Activated naive CD4-positive, alpha-beta T cell treated with anti-CD3 and anti-CD28 coated beads for 36 hours (primary cell): ENCODE measurements at regions of chr10 and their contacts with region 1.

Region 1: DNA sequence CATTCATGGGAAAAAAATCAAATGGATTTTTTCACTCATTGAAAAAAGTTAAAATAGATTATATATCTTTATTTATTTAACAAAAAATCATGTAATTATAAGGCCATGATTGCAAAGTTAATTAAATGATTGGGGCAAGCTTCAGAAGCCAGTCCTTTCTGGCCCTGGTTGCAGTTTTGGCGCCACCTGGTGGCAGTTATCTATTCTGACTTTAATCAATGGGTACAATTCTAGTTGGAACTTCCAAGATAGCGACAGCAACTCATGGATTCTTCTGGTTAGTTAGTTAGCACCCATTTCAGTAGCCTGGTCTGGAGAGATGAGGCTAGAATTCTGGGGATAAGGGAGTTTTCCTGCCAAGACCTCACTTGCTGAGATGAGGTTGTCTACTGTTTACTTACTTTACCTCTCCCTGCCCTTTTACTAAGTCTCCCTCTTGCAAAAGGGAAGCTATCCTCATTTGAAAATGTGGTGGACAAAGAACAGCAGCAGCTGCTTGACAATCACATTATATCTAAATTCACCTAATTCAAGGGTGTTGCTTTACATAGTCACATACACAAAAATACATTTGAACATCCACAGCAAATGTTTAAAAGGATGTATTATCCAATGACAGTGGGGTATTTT is 42.3 kb downstream of the NOC3L start:
- DNase-seq: peak; percentile 79
- H3K4me3 Mint-ChIP-seq: no peak overlapping the region
- H3K27ac Mint-ChIP-seq: no peak overlapping the region
- H3K4me1 Mint-ChIP-seq: no peaks in the 10 kb centered on the region
- H3K27me3 Mint-ChIP-seq: no peaks in the 10 kb centered on the region

Region 2: DNA sequence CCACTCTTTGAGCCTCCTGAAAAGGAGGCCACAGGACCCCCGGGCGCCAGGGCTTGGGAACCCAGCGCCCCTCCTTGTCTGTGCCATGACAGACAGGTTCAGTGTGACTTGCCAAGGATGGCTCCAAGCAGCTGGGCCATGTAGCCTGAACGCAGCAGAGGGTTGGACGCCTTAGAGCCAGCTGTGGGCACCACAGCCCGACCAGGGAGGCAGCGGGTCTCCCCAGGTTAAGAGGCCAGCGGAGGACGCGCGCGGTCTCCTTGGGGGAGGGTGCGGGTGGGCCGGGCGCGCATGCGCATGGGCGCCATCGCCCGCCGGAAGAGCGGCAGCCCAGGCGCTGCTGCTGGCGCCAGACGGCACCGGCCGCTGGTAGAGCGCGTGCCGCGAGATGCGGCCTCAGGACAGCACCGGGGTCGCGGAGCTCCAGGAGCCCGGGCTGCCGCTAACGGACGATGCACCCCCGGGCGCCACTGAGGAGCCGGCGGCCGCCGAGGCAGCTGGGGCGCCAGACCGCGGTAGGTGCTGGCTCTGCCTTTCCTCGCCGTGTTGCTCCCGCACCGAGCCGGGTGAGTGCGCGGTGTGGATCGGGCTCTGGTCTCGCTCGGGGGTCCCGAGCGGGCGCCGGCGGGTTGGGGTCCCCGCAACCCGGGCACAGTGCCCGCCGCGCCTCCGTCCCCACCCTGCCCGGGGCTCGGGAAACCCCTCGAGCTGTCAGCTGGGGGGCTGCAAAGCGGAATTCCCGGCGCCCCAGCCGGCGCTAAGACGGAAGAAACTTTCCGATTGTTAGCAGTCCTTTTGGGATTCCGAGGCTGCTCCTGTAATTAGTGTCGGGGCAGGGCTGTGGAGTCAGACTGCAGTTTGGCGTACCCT is 426.5 kb before region 1 on chr10 and contains the start of gene SLC35G1:
- CTCF ChIA-PET with region 1: no interaction called
- intact Hi-C with region 1: no loop called
- DNase-seq: peak; percentile 71
- H3K4me3 Mint-ChIP-seq: peak within 1 kb of the TSS; percentile 82
- H3K27ac Mint-ChIP-seq: peak within 1 kb of the TSS; percentile 37
- H3K4me1 Mint-ChIP-seq: peaks cover 37% of the 10 kb centered on the region
- H3K27me3 Mint-ChIP-seq: no peaks in the 10 kb centered on the region
- total RNA-seq, gene SLC35G1: 3.8 to 4.1 TPM

Region 3: DNA sequence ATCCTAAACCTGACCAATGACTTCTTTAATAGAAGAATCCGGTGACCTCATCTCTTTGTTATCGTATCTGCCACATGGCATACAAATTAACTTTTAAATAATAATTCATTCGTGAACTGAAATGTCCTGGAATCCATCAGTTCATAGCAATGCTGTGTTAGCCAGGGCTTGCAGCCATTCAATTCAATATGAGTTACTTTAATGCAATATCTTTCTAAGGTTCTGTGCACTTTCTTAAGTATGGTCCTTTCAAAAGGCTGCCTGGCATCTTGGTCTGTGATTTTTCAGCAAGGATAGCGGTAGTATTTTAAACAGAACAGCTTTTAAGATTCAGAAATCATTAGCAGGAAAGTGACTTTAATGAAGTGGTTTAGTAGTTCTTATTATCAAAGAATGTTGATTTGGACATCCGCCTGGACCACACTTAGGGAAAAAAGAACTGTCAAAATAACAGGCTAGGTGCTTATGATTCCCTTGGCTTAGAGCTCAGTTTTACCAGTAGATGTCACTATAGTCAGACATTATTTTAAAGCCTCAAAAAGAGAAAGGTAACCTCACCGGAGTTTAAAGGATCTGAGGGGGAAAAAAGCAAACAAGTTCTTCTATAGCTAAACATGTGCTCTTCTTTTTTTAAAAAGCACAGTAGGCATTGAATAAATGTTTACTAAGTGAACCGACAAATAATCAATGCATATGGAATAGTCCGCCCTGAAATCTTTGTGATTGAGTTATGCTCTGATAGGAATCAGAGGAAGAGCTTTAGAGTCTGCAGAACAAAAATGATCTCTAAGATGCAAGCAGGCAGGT is 403.9 kb before region 1 on chr10:
- CTCF ChIA-PET with region 1: interaction called, 18 read pairs
- intact Hi-C with region 1: loop called (anchors 1 kb)
- DNase-seq: no peak
- H3K4me3 Mint-ChIP-seq: no peak overlapping the region
- H3K27ac Mint-ChIP-seq: no peak overlapping the region
- H3K4me1 Mint-ChIP-seq: no peaks in the 10 kb centered on the region
- H3K27me3 Mint-ChIP-seq: no peaks in the 10 kb centered on the region

Region 4: DNA sequence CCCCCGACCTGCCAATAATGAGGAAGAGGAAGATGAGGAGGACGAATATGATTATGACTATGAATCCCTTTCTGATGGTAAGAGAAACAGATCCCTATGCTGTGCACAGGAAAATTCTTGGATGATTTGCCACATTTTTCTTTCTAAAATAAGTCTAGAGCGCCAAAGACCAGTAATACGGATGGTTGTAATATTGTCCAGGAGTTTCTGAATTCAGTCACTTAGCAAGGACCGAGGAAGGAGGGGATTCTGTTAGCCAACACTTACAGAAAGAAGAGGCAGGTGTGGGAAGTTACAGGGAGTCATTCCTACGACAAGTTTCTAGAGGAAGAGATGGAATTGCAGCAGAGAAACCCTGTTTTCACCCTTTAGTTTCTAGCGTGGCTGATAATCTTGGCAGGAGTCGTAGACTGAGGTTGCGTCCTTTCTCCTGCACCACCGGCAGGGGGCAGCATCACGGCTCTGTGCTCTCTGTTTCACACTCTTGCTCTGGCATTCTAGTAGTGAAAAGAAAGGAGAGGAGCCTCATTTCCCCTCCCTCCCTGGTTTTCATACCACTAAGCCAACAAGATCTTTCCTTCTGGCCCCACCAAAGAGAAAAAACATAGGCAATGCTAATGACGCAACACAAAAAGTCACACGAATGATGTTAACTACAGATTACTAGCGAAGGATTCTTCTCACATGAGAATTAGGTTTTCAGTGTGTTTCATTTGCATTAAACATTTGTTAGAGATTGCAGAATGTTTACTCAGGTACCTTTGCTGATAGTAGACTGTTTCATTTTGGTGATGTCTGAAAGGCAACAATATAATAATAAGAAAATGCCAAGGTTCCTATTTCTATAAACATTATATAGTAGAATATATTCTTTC is 40.3 kb before region 1 on chr10:
- CTCF ChIA-PET with region 1: interaction called, 3 read pairs
- intact Hi-C with region 1: loop called (anchors 1 kb)
- DNase-seq: peak; percentile 63
- H3K4me3 Mint-ChIP-seq: no peak overlapping the region
- H3K27ac Mint-ChIP-seq: no peak overlapping the region
- H3K4me1 Mint-ChIP-seq: peaks cover 5% of the 10 kb centered on the region
- H3K27me3 Mint-ChIP-seq: peaks cover 11% of the 10 kb centered on the region

Region 5: GRCh38 chr10:94308866-94309265 is 11.5 kb before region 1 on chr10:
- CTCF ChIA-PET with region 1: interaction called, 22 read pairs
- intact Hi-C with region 1: no loop called
- DNase-seq: no peak
- H3K4me3 Mint-ChIP-seq: no peak overlapping the region
- H3K27ac Mint-ChIP-seq: no peak overlapping the region
- H3K4me1 Mint-ChIP-seq: no peaks in the 10 kb centered on the region
- H3K27me3 Mint-ChIP-seq: peaks cover 46% of the 10 kb centered on the region

Region 6: DNA sequence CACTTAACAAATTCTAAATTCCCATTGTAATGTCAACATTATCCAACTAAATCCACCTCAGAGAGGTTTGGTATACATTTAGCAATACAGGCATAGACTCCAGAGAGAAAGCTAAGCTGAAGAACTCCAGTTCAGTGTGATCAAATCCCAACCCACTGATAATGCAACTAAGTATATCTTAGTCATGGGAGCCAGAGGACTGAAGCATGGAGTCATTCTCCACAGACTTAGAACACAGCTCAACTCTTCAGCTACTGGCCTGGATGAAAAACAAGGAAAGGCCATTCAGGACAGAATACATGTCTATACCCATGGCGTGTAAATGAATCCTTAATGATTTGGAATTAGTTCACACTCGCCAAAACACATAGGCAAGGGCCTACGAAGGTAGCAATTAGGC is 14.5 kb after region 1 on chr10:
- CTCF ChIA-PET with region 1: interaction called, 27 read pairs
- intact Hi-C with region 1: no loop called
- DNase-seq: no peak
- H3K4me3 Mint-ChIP-seq: no peak overlapping the region
- H3K27ac Mint-ChIP-seq: no peak overlapping the region
- H3K4me1 Mint-ChIP-seq: no peaks in the 10 kb centered on the region
- H3K27me3 Mint-ChIP-seq: no peaks in the 10 kb centered on the region

Region 7: DNA sequence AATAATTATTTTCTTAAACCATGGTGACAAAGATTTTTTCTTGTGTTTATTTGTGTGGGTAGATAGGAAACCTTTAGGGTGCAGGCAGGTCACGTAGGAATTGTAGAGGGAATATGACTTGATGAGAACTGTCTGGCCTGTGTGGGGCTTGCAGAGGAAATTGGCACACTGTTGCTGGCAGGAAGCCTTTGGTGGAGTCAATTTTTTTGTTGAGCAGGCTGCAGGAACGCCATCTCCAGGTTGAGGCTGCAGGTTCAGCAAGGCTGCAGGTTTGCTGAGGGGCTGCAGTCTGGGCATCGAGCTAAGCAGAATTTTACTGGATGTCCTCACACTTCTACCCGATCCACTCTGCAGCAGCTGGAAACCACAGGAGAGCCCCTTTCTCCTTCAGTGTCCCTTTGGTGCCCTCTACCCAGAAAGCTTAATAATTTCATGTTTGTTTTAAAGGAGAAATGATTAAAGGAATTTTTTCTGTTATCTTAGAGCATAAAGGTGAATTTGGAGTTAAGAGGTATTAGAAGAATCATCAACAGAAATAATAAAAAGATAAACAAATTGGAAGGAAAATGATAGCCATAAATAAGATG is 119.0 kb after region 1 on chr10:
- CTCF ChIA-PET with region 1: interaction called, 10 read pairs
- intact Hi-C with region 1: loop called (anchors 2 kb)
- DNase-seq: no peak
- H3K4me3 Mint-ChIP-seq: no peak overlapping the region
- H3K27ac Mint-ChIP-seq: no peak overlapping the region
- H3K4me1 Mint-ChIP-seq: no peaks in the 10 kb centered on the region
- H3K27me3 Mint-ChIP-seq: peaks cover 17% of the 10 kb centered on the region